Common myeloid progenitor, CD34-positive (primary cell): ENCODE measurements at regions of chr1 and their contacts with region 1.

Region 1: DNA sequence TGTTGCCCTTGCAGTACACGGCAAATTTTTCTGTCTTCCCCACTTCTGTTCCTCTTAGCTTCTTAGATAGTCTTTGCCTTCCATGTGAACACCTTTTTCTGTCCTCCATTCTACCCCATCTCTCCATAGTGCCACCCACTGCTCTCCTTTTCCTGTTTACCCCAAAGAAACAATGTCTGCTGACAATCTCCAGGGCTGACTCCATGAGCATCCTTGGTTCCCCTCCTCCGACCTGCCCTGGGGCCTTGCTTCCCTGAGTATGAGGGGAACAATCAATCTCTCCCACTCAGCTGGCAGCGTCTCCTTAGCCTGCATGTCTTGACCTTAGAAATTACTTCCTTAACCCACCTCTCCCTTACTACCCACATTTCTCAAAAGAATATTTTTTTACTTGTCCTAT is 12.3 kb upstream of the MYBPHL start:
- DNase-seq: no peak
- H3K4me3 ChIP-seq: no peak overlapping the region
- H3K27ac ChIP-seq: no peak overlapping the region
- H3K4me1 ChIP-seq: no peaks in the 10 kb centered on the region
- H3K27me3 ChIP-seq: no peaks in the 10 kb centered on the region

Region 2: DNA sequence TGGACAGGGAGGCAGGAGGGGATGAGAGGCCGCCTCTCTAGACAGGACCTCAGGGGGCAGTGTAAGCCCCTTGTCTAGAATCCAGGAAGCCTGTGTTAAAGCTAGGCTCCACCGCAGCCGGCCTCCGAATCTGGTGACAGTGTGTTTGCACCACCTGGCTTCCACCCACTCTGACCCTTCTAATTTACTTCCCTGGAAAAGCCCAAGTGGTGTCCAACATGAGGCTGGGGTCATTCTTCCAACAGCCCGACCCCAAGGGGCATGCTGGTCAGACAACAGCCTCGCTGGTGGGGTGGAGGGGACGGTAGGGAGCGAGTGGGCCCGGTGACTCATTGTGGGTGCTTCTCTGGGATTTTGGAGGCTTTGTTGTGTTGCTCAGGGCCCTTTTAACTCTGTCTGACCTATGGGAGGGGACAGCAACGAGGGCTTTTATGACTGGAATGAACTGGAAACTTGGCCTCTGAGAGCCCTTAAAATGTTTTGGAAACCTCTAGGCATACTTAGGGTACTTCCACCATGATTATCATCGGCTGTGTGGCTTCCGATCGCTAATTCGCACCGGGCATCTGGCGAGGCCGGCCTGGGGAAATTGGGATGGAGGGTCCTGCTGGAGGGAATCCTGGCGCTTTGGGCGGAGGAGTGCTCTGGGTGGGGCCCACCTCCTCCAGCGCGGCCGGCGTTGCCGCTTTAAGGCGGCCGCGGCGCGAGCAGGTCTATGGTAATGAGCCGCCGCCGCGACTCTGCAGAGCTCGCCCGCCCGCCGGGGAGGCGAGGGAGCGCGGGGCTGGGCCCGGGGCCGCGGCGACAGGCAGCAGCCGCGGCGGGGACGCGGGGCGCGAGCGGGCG is 70.1 kb before region 1 on chr1 and contains the start of gene CELSR2:
- CTCF ChIA-PET with region 1: no interaction called
- POLR2A ChIA-PET with region 1: no interaction called
- DNase-seq: peak; percentile 44 to 80 (median 70)
- H3K4me3 ChIP-seq: peak within 1 kb of the TSS in 5 of 7 experiments; percentile 55 to 66 (median 61)
- H3K27ac ChIP-seq: no peak within 1 kb of the TSS
- H3K4me1 ChIP-seq: peaks cover 0 to 13% (median 9%) of the 10 kb centered on the region in 4 experiments
- H3K27me3 ChIP-seq: peaks cover 0 to 89% (median 20%) of the 10 kb centered on the region in 5 experiments

Region 3: GRCh38 chr1:109282952-109283747 is 36.0 kb before region 1 on chr1 and contains the start of gene PSRC1:
- CTCF ChIA-PET with region 1: no interaction called
- POLR2A ChIA-PET with region 1: no interaction called
- DNase-seq: peak; percentile 84 to 87 (median 85)
- H3K4me3 ChIP-seq: peak within 1 kb of the TSS; percentile 76 to 94 (median 89)
- H3K27ac ChIP-seq: peak within 1 kb of the TSS; percentile 13 to 73
- H3K4me1 ChIP-seq: peaks cover 6 to 39% (median 23%) of the 10 kb centered on the region in 4 experiments
- H3K27me3 ChIP-seq: no peaks in the 10 kb centered on the region

Region 4: DNA sequence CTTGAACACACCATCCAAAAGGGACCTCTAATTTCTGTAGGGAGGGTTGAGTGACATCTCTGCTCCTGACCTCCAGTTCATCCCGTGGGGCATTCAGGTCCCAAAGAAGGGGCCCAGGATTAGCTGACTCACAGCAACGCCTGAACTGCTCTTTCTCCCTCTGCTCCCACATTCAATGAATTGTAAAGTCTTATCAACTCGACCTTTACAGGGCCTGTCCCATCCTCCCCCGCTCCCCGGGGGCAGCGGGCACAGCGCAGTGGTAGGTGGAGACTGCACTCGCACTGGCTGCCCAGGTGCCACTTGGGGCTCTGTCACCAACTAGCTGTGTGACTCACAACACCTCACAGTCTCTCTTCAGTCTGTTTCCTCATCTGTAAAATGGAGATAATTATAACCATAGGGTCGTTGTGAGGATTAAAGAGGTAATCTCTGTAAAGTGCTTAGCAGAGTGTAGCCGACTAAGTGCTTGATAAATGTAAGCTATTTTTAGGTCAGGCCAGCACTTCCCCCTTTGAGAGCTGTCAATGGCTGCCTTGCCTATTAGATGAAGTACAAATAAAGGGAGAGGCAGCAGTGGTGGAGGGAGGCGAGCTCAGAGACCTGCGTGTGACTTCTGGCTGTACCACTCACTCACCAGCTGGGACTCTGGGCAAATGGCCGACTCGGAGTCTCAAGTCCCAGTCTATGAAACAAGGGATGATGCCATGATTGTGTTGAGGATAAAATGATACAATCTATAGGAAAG is 11.7 kb before region 1 on chr1:
- CTCF ChIA-PET with region 1: interaction called, 17 read pairs
- POLR2A ChIA-PET with region 1: no interaction called
- DNase-seq: peak in 2 of 3 donors; percentile 26 to 40
- H3K4me3 ChIP-seq: no peak overlapping the region
- H3K27ac ChIP-seq: no peak overlapping the region
- H3K4me1 ChIP-seq: peaks cover 0 to 16% (median 4%) of the 10 kb centered on the region in 4 experiments
- H3K27me3 ChIP-seq: peaks cover 0 to 14% (median 2%) of the 10 kb centered on the region in 5 experiments